PC-9 (cell line): ENCODE measurements at regions of chr13 and their contacts with region 1.

Region 1: DNA sequence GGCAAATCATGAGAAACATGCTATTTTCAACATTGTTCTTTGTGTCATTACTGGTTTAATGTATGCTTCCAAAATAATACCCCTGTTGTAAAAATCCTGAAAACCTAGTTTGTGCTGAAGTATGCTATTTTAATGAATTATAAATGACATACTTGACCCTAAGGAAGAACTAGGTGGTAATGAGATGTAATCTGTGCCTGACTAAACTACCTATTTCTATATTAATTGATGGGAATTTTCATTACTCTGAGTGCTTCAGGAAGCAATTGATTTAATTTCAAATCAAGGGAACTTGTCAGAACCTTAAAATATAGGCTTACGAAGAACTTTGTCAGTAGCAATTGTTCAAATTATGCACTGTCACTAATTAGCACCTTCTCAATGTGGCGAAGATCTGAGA is 1005.6 kb upstream of the SLC10A2 start:
- DNase-seq: no peak
- H3K4me3 ChIP-seq: no peak overlapping the region
- H3K27ac ChIP-seq: no peak overlapping the region
- H3K4me1 ChIP-seq: no peaks in the 10 kb centered on the region
- H3K27me3 ChIP-seq: no peaks in the 10 kb centered on the region
- CTCF ChIP-seq: no peak

Region 2: GRCh38 chr13:104057851-104058250 is 14.0 kb before region 1 on chr13:
- CTCF ChIA-PET with region 1: no interaction called
- POLR2A ChIA-PET with region 1: no interaction called
- intact Hi-C with region 1: loop called (anchors 2 kb)
- DNase-seq: no peak
- H3K4me3 ChIP-seq: no peak overlapping the region
- H3K27ac ChIP-seq: no peak overlapping the region
- H3K4me1 ChIP-seq: no peaks in the 10 kb centered on the region
- H3K27me3 ChIP-seq: no peaks in the 10 kb centered on the region
- CTCF ChIP-seq: no peak